Naive thymus-derived CD4-positive, alpha-beta T cell (primary cell): ENCODE measurements at regions of chr2 and their contacts with region 1.

Region 1: DNA sequence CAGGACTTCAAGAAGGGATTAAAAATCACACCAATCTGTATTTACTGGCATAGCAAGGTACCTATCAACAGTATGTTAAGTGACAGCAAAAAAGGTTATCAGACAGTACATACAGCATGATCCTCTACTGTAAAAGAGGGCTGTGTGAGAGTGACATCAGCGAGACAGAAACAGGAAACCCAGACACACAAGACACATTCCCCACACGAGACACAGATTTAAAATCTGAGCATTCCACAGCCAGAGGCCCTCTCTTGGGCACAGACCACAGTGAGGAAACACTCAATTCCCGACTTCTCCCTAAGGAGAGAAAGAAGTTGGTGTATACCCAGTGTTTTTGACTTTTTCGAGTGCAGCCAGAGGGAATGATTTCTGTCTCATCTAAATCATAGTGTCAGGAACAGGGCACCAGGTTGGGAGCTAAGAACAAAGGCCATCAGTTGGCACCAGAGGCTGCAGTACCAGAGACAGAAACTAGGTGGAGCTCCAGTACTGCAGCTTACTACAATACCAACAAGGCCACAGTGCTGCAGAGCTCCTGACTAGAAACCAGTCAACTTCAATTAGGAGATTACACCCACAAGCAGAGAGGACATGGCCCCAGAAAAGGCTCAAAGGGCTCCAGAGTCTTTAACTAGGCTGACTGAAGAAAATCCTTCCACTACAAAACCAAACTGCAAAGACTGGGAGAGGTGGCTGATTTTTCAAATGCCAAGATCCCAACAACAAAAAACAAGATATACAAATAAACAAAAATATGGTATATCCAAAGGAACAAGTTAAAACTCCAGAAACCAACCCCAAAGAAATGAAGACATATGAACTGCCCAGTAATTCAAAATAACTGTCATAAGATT is 41.0 kb downstream of the UNC50 start:
- DNase-seq: peak; percentile 53 to 87 (median 80)
- ATAC-seq: peak; percentile 99
- H3K4me3 ChIP-seq: no peak overlapping the region
- H3K4me3 Mint-ChIP-seq: peak overlapping the region in 8 of 10 donors; percentile 5 to 66 (median 50)
- H3K27ac ChIP-seq: peak overlapping the region; percentile 39
- H3K27ac Mint-ChIP-seq: peak overlapping the region; percentile 73 to 96 (median 92)
- H3K4me1 ChIP-seq: peaks cover 29 to 44% of the 10 kb centered on the region in 2 donors
- H3K4me1 Mint-ChIP-seq: peaks cover 40 to 66% (median 57%) of the 10 kb centered on the region in 7 donors
- H3K27me3 ChIP-seq: no peaks in the 10 kb centered on the region
- H3K27me3 Mint-ChIP-seq: no peaks in the 10 kb centered on the region

Region 2: DNA sequence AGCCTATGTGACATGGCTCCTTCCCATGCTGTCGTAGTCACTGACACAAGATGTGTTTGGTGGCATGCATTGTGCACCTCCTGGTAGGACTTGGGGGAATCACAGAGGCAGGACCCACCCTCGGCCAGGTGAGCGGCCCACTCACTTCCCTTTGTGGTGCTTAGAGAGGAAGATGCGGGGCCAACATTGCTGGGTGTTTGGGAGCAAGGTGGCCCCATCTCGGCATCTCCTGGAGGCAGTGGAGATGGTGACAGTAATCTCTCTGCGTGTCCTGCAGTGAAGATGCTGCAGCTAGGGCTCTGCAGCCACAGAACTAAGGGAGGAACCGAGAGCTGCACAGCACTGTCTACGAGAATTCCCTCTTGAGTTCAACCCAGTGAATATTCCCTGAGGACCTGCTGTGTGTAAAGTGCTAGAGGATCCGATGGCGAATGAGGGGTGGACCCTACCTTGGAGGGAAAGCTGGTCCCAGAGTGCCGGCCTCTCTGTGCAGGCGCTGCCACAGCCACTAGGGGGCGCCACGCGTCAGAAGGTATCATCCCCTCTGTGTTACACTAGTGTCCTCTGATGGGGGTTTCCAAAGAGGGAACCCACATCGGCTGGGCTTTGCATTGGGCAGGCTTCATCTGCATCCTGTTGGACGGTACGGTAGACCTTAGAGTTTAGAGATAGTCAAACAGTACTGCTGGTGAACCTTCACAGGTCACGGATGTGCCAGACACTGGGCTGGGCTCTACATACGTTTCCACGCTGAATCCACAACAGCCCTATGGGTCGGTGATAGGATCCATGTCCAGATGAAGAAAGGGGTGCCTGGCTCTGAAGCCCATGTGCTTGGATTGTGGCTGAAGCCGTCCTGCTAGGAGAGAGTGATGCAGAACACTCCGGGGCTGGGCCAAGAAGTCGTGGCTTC is 80.2 kb before region 1 on chr2:
- CTCF ChIA-PET with region 1: no interaction called
- POLR2A ChIA-PET with region 1: interaction called, 3 read pairs
- intact Hi-C with region 1: loop called in 1 of 2 experiments (anchors 1 kb)
- DNase-seq: peak; percentile 43 to 78 (median 60)
- ATAC-seq: peak; percentile 84
- H3K4me3 ChIP-seq: no peak overlapping the region
- H3K4me3 Mint-ChIP-seq: no peak overlapping the region
- H3K27ac ChIP-seq: no peak overlapping the region
- H3K27ac Mint-ChIP-seq: peak overlapping the region in 8 of 9 donors; percentile 32 to 81 (median 57)
- H3K4me1 ChIP-seq: no peaks in the 10 kb centered on the region
- H3K4me1 Mint-ChIP-seq: peaks cover 0 to 20% (median 7%) of the 10 kb centered on the region in 7 donors
- H3K27me3 ChIP-seq: no peaks in the 10 kb centered on the region
- H3K27me3 Mint-ChIP-seq: no peaks in the 10 kb centered on the region

Region 3: GRCh38 chr2:98664327-98664726 is 15.0 kb after region 1 on chr2:
- CTCF ChIA-PET with region 1: interaction called, 14 read pairs
- POLR2A ChIA-PET with region 1: interaction called, 8 read pairs
- intact Hi-C with region 1: loop called (anchors 2 kb)
- DNase-seq: peak in 8 of 9 donors; percentile 39 to 88 (median 80)
- ATAC-seq: peak; percentile 83
- H3K4me3 ChIP-seq: peak overlapping the region; percentile 14
- H3K4me3 Mint-ChIP-seq: peak overlapping the region; percentile 56 to 94 (median 80)
- H3K27ac ChIP-seq: peak overlapping the region; percentile 79
- H3K27ac Mint-ChIP-seq: peak overlapping the region; percentile 91 to 99 (median 97)
- H3K4me1 ChIP-seq: peaks cover 51 to 70% of the 10 kb centered on the region in 2 donors
- H3K4me1 Mint-ChIP-seq: peaks cover 35 to 93% (median 75%) of the 10 kb centered on the region in 7 donors
- H3K27me3 ChIP-seq: no peaks in the 10 kb centered on the region
- H3K27me3 Mint-ChIP-seq: no peaks in the 10 kb centered on the region

Region 4: GRCh38 chr2:98702127-98702802 is 52.9 kb after region 1 on chr2:
- CTCF ChIA-PET with region 1: interaction called, 5 read pairs
- POLR2A ChIA-PET with region 1: interaction called, 4 read pairs
- intact Hi-C with region 1: loop called in 1 of 2 experiments (anchors 1 kb)
- DNase-seq: no peak
- ATAC-seq: peak; percentile 26
- H3K4me3 ChIP-seq: no peak overlapping the region
- H3K4me3 Mint-ChIP-seq: peak overlapping the region in 9 of 10 donors; percentile 46 to 77 (median 62)
- H3K27ac ChIP-seq: peak overlapping the region; percentile 62
- H3K27ac Mint-ChIP-seq: peak overlapping the region; percentile 48 to 93 (median 75)
- H3K4me1 ChIP-seq: peaks cover 18 to 56% of the 10 kb centered on the region in 2 donors
- H3K4me1 Mint-ChIP-seq: peaks cover 47 to 92% (median 84%) of the 10 kb centered on the region in 7 donors
- H3K27me3 ChIP-seq: no peaks in the 10 kb centered on the region
- H3K27me3 Mint-ChIP-seq: no peaks in the 10 kb centered on the region

Region 5: GRCh38 chr2:98828793-98829371 is 179.5 kb after region 1 on chr2:
- CTCF ChIA-PET with region 1: interaction called, 30 read pairs
- POLR2A ChIA-PET with region 1: interaction called, 3 read pairs
- intact Hi-C with region 1: loop called in 1 of 2 experiments (anchors 2 kb)
- DNase-seq: peak in 1 of 9 donors; percentile 28
- ATAC-seq: peak; percentile 28
- H3K4me3 ChIP-seq: no peak overlapping the region
- H3K4me3 Mint-ChIP-seq: peak overlapping the region in 9 of 10 donors; percentile 7 to 79 (median 62)
- H3K27ac ChIP-seq: no peak overlapping the region
- H3K27ac Mint-ChIP-seq: peak overlapping the region; percentile 60 to 93 (median 79)
- H3K4me1 ChIP-seq: peaks cover 25 to 39% of the 10 kb centered on the region in 2 donors
- H3K4me1 Mint-ChIP-seq: peaks cover 39 to 73% (median 48%) of the 10 kb centered on the region in 7 donors
- H3K27me3 ChIP-seq: no peaks in the 10 kb centered on the region
- H3K27me3 Mint-ChIP-seq: peaks cover 0 to 2% (median 0%) of the 10 kb centered on the region in 5 donors

Region 6: GRCh38 chr2:98835831-98836385 is 186.5 kb after region 1 on chr2:
- CTCF ChIA-PET with region 1: interaction called, 30 read pairs
- POLR2A ChIA-PET with region 1: interaction called, 8 read pairs
- intact Hi-C with region 1: loop called (anchors 1 kb)
- DNase-seq: peak in 7 of 9 donors; percentile 55 to 78 (median 72)
- ATAC-seq: peak; percentile 87
- H3K4me3 ChIP-seq: peak overlapping the region; percentile 1
- H3K4me3 Mint-ChIP-seq: peak overlapping the region; percentile 32 to 79 (median 52)
- H3K27ac ChIP-seq: peak overlapping the region; percentile 66
- H3K27ac Mint-ChIP-seq: peak overlapping the region; percentile 78 to 98 (median 88)
- H3K4me1 ChIP-seq: peaks cover 16 to 43% of the 10 kb centered on the region in 2 donors
- H3K4me1 Mint-ChIP-seq: peaks cover 24 to 51% (median 28%) of the 10 kb centered on the region in 7 donors
- H3K27me3 ChIP-seq: no peaks in the 10 kb centered on the region
- H3K27me3 Mint-ChIP-seq: peaks cover 0 to 17% (median 0%) of the 10 kb centered on the region in 5 donors

Region 7: GRCh38 chr2:99141110-99142108 is 492.0 kb after region 1 on chr2 and contains the start of gene C2orf15:
- CTCF ChIA-PET with region 1: no interaction called
- POLR2A ChIA-PET with region 1: no interaction called
- intact Hi-C with region 1: no loop called
- DNase-seq: peak; percentile 89 to 98 (median 96)
- ATAC-seq: peak; percentile 95
- H3K4me3 ChIP-seq: peak within 1 kb of the TSS; percentile 97
- H3K4me3 Mint-ChIP-seq: peak within 1 kb of the TSS; percentile 90 to 99 (median 97)
- H3K27ac ChIP-seq: peak within 1 kb of the TSS; percentile 82
- H3K27ac Mint-ChIP-seq: peak within 1 kb of the TSS; percentile 92 to 99 (median 98)
- H3K4me1 ChIP-seq: peaks cover 13% of the 10 kb centered on the region in 2 donors
- H3K4me1 Mint-ChIP-seq: peaks cover 0 to 31% (median 25%) of the 10 kb centered on the region in 7 donors
- H3K27me3 ChIP-seq: no peaks in the 10 kb centered on the region
- H3K27me3 Mint-ChIP-seq: peaks cover 0 to 41% (median 0%) of the 10 kb centered on the region in 5 donors
- total RNA-seq, gene C2orf15: 0.48 to 3.8 (median 3.1) TPM

Region 8: DNA sequence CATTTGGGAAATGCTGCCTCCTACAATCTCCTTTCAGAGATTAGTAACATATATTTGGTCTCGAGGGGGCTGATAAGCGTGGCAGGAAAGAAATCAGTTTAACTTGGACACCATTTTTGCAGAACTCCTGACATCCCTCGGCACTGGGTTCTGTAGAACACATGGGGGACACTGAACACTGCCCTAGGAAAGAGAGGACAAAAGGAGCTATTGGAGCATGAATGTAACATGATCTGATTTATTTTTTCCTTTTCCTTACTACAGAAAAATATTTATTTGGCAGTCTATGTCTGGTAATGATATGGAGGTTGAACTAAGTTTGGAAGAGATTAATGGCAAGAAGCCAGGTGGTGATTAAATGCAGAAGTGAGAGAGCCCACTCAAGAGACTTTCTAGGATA is 1339.2 kb after region 1 on chr2:
- CTCF ChIA-PET with region 1: no interaction called
- POLR2A ChIA-PET with region 1: no interaction called
- intact Hi-C with region 1: no loop called
- DNase-seq: no peak
- ATAC-seq: no peak
- H3K4me3 ChIP-seq: no peak overlapping the region
- H3K4me3 Mint-ChIP-seq: no peak overlapping the region
- H3K27ac ChIP-seq: no peak overlapping the region
- H3K27ac Mint-ChIP-seq: no peak overlapping the region
- H3K4me1 ChIP-seq: no peaks in the 10 kb centered on the region
- H3K4me1 Mint-ChIP-seq: peaks cover 0 to 2% (median 0%) of the 10 kb centered on the region in 7 donors
- H3K27me3 ChIP-seq: no peaks in the 10 kb centered on the region
- H3K27me3 Mint-ChIP-seq: no peaks in the 10 kb centered on the region